Heart right ventricle (tissue), 16 donors: ENCODE measurements at regions of chr16 and their contacts with region 1.

Region 1: GRCh38 chr16:11407047-11407982 is 62.1 kb downstream of the RMI2 start:
- DNase-seq: peak in 1 of 2 donors; percentile 58
- ATAC-seq: peak in 6 of 8 donors; percentile 34 to 76 (median 51)
- H3K4me3 ChIP-seq: no peak overlapping the region
- H3K27ac ChIP-seq: no peak overlapping the region
- H3K4me1 ChIP-seq: peaks cover 0 to 4% (median 0%) of the 10 kb centered on the region in 9 donors
- H3K27me3 ChIP-seq: no peaks in the 10 kb centered on the region
- CTCF ChIP-seq: peak; percentile 38 to 81 (median 66)

Region 2: GRCh38 chr16:11319529-11320146 is 87.7 kb before region 1 on chr16:
- intact Hi-C with region 1: no loop called
- DNase-seq: no peak
- ATAC-seq: no peak
- H3K4me3 ChIP-seq: no peak overlapping the region
- H3K27ac ChIP-seq: no peak overlapping the region
- H3K4me1 ChIP-seq: no peaks in the 10 kb centered on the region
- H3K27me3 ChIP-seq: no peaks in the 10 kb centered on the region
- CTCF ChIP-seq: no peak

Region 3: GRCh38 chr16:11506741-11507305 is 99.5 kb after region 1 on chr16:
- intact Hi-C with region 1: loop called in 2 of 10 experiments (anchors 10 kb)
- DNase-seq: no peak
- ATAC-seq: peak in 2 of 8 donors; percentile 24 to 35
- H3K4me3 ChIP-seq: no peak overlapping the region
- H3K27ac ChIP-seq: no peak overlapping the region
- H3K4me1 ChIP-seq: no peaks in the 10 kb centered on the region
- H3K27me3 ChIP-seq: no peaks in the 10 kb centered on the region
- CTCF ChIP-seq: peak in 1 of 9 donors; percentile 15

Region 4: DNA sequence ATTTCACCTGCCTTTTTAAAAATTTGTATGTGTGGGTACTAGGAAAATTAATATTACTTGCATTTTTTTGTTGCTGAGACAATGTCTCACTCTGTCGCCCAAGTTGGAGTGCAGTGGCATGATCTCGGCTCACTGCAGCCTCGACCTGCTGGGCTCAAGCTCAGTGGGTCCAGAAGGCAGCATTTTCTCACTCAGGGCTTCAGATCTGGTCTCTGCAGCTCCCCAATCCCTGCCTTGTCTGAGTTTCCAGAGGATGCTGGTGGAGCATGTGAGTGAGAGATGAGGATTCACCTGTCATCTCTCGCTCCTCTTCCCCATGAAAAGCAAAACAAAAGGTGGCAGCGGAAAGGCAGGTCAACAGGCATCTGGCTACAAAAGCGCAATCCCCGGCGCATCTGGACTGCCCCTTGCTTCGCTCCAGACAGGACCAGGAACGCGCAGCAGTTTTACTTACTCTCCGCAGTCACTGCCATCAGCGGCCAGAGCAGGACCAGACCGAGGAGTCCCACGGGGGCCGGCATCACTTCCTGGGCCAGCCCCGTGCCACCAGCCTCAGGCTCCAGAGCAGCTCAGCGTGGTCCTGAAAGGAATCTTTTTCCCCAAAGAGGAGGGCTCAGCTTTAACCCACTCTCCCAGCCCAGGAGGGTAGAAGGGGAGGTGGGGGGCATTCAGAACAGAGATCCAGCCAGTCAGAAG is 119.5 kb after region 1 on chr16:
- intact Hi-C with region 1: loop called in 3 of 10 experiments (anchors 5 to 10 kb)
- DNase-seq: no peak
- ATAC-seq: peak in 2 of 8 donors; percentile 25 to 35
- H3K4me3 ChIP-seq: no peak overlapping the region
- H3K27ac ChIP-seq: no peak overlapping the region
- H3K4me1 ChIP-seq: peaks cover 0 to 6% (median 0%) of the 10 kb centered on the region in 9 donors
- H3K27me3 ChIP-seq: peaks cover 0 to 26% (median 7%) of the 10 kb centered on the region in 7 donors
- CTCF ChIP-seq: no peak

Region 5: DNA sequence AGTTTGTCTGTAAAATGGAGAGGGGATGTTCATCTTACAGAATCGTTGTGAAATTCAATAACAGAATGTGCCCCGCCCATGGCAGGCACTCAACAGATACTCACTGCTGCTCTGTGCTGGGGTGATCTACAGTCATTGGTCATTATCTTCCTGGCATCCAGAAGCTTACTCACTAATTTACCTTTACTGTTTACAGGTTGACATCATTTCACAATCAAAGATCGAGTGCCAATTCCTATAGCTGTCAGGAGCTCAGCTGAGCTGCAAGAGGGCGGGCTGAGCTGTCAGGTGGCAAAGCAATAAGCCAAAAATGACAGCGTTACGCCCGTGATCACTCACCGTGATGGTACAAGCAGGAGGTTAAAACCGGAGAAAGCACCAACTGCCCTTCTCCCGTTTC is 128.2 kb after region 1 on chr16:
- intact Hi-C with region 1: loop called in 2 of 10 experiments (anchors 5 to 10 kb)
- DNase-seq: no peak
- ATAC-seq: no peak
- H3K4me3 ChIP-seq: no peak overlapping the region
- H3K27ac ChIP-seq: no peak overlapping the region
- H3K4me1 ChIP-seq: peaks cover 0 to 13% (median 0%) of the 10 kb centered on the region in 9 donors
- H3K27me3 ChIP-seq: no peaks in the 10 kb centered on the region
- CTCF ChIP-seq: no peak

Region 6: DNA sequence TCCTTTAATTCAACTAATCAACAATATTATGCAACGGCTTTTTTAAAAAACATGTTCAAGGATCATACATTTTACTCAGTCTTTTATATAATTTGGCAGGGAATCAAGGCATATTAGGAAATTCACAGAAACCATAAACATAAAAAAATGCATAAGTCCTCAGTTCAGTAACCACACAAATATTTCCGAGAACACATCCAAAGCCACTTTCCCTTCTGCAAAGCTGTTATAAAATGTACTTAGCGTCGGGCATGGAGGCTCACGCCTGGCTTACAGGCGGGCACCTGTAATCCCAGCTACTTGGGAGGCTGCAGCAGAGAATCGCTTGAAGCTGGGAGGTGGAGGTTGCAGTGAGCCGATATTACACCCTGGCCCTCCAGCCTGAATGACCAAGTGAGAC is 399.4 kb after region 1 on chr16:
- intact Hi-C with region 1: loop called in 5 of 10 experiments (anchors 5 to 10 kb)
- DNase-seq: no peak
- ATAC-seq: no peak
- H3K4me3 ChIP-seq: no peak overlapping the region
- H3K27ac ChIP-seq: no peak overlapping the region
- H3K4me1 ChIP-seq: peaks cover 0 to 3% (median 0%) of the 10 kb centered on the region in 9 donors
- H3K27me3 ChIP-seq: no peaks in the 10 kb centered on the region
- CTCF ChIP-seq: no peak

Region 7: DNA sequence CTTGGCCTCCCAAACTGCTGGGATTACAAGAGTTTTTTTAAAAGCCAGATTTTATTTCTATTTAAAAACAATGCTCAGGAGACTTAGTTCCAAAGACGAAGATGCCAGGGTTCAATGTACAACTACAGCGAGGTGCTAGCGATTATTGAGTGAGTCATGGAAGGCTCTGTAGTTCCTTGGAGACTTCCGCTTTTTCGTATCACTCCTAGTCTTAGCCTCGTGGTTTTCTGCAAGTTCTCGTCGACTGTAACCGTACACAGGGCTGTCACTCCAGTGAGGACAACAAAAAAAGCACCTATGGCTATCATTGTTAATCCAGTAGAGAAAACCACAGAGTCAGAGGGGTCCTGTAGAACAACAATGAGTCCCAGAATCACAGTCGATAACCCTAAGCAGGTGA is 412.5 kb after region 1 on chr16:
- intact Hi-C with region 1: loop called in 5 of 10 experiments (anchors 5 to 10 kb)
- DNase-seq: no peak
- ATAC-seq: no peak
- H3K4me3 ChIP-seq: no peak overlapping the region
- H3K27ac ChIP-seq: no peak overlapping the region
- H3K4me1 ChIP-seq: peaks cover 0 to 23% (median 7%) of the 10 kb centered on the region in 9 donors
- H3K27me3 ChIP-seq: no peaks in the 10 kb centered on the region
- CTCF ChIP-seq: no peak